ENCODE measurements at regions of chr7 and their contacts with region 1.

Region 1: DNA sequence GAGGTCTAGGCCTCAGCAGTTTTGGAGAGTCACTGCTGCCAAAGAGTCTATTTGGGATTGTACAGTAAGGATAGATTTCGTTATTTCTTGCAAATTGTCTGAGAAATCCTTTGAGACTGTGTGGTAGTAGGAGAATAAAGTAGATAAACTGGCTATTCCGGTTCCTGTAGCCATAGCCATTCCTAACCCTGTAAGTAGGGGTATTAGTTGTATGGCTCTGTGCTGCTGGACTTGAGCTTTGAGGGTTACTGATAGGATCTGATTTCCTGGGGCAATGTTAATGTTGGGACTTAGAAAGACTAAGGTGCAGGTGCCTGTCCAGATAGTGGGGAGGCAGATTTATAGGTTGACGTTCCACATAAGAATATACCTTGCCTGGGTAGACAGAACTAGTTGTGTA is 36.1 kb upstream of the ZNF138 start:
- DNase-seq: no peak
- H3K4me3 ChIP-seq: no peak overlapping the region
- H3K4me3 Mint-ChIP-seq: no peak overlapping the region
- H3K27ac ChIP-seq: no peak overlapping the region
- H3K27ac Mint-ChIP-seq: no peak overlapping the region
- H3K4me1 ChIP-seq: no peaks in the 10 kb centered on the region
- H3K4me1 Mint-ChIP-seq: no peaks in the 10 kb centered on the region
- H3K27me3 ChIP-seq: no peaks in the 10 kb centered on the region
- H3K27me3 Mint-ChIP-seq: no peaks in the 10 kb centered on the region
- CTCF ChIP-seq: no peak

Region 2: GRCh38 chr7:64706625-64707292 is 51.4 kb before region 1 on chr7:
- intact Hi-C with region 1: loop called in 1 of 2 experiments (anchors 5 kb)
- DNase-seq: no peak
- H3K4me3 ChIP-seq: peak overlapping the region in 1 of 3 experiments; percentile 33
- H3K4me3 Mint-ChIP-seq: no peak overlapping the region
- H3K27ac ChIP-seq: no peak overlapping the region
- H3K27ac Mint-ChIP-seq: no peak overlapping the region
- H3K4me1 ChIP-seq: no peaks in the 10 kb centered on the region
- H3K4me1 Mint-ChIP-seq: no peaks in the 10 kb centered on the region
- H3K27me3 ChIP-seq: no peaks in the 10 kb centered on the region
- H3K27me3 Mint-ChIP-seq: peaks cover 0 to 2% (median 0%) of the 10 kb centered on the region in 3 donors
- CTCF ChIP-seq: no peak